ENCODE measurements at regions of chr19 and their contacts with region 1.

Region 1: GRCh38 chr19:56170261-56170660 is 5.5 kb upstream of the GALP start:
- DNase-seq: no peak
- H3K4me3 ChIP-seq: no peak overlapping the region
- H3K27ac ChIP-seq: no peak overlapping the region
- H3K4me1 ChIP-seq: no peaks in the 10 kb centered on the region
- H3K27me3 ChIP-seq: peaks cover 0 to 2% of the 10 kb centered on the region in 2 experiments
- CTCF ChIP-seq: no peak
- POLR2A ChIP-seq: no peak

Region 2: GRCh38 chr19:56080669-56081401 is 89.4 kb before region 1 on chr19:
- CTCF ChIA-PET with region 1: interaction called, 328 read pairs
- POLR2A ChIA-PET with region 1: interaction called, 3 read pairs
- dilution Hi-C with region 1: no loop called
- intact Hi-C with region 1: loop called (anchors 1 kb)
- DNase-seq: peak; percentile 83
- H3K4me3 ChIP-seq: peak overlapping the region; percentile 10 to 38 (median 32)
- H3K27ac ChIP-seq: no peak overlapping the region
- H3K4me1 ChIP-seq: peaks cover 8% of the 10 kb centered on the region
- H3K27me3 ChIP-seq: peaks cover 0 to 3% of the 10 kb centered on the region in 2 experiments
- CTCF ChIP-seq: peak; percentile 58 to 81
- POLR2A ChIP-seq: no peak

Region 3: DNA sequence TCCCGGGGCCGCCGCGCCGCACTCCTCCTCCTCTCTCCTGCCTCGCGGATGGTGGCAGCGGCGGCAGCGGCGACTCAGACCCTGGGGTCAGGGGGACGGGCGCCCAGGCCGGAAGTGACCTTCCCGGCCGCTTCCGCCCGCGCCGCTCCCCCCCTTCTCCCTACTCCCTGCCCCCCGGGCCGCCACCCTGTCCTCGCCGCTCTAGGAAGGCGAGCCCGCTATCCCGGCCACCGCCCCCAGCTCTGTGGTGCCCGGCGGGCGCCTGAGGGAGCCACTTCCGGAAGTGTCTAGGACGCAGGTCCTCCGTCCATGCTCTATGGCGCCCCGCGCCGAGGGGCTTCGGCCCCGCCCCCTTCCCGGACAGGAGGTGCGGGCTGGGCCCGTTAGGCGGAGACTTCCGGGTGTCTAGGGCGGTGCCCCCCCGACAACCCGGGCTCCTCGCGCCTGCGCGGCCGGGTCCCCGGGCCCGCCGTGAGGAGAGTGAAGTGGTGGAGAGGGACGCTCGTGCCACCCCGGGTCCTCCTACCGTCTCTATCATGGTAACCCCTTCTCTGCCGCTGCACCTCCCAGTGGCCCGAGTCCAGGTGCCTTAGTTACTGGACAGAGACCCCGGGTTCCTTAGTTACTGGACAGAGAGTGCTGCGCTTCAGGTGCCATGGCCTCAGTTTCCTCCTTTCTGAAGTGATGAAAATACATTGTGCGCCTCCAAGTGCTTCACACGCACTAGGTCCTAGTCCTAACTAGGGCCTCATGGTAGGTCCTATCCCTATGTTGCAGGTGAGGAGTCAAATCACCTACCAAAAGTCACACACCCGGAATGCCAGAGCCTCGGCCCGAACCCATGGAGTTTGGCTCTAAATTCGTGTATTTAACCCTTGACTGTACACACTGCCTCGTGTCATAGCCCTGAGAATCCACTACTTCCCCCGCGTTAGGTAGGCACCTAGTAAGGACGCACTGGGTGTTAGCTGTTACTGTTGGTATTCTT is 48.8 kb before region 1 on chr19 and contains the start of gene ZNF787:
- CTCF ChIA-PET with region 1: interaction called, 6 read pairs
- POLR2A ChIA-PET with region 1: interaction called, 6 read pairs
- dilution Hi-C with region 1: no loop called
- intact Hi-C with region 1: loop called (anchors 5 kb)
- DNase-seq: peak; percentile 97
- H3K4me3 ChIP-seq: peak within 1 kb of the TSS; percentile 39 to 60 (median 50)
- H3K27ac ChIP-seq: peak within 1 kb of the TSS; percentile 84
- H3K4me1 ChIP-seq: peaks cover 18% of the 10 kb centered on the region
- H3K27me3 ChIP-seq: no peaks in the 10 kb centered on the region
- CTCF ChIP-seq: no peak
- POLR2A ChIP-seq: peak; percentile 53
- total RNA-seq, gene ZNF787: 31.8 and 32.7 TPM in 2 replicates

Region 4: GRCh38 chr19:56155124-56155687 is 15.1 kb before region 1 on chr19:
- CTCF ChIA-PET with region 1: interaction called, 27 read pairs
- POLR2A ChIA-PET with region 1: no interaction called
- dilution Hi-C with region 1: no loop called
- intact Hi-C with region 1: no loop called
- DNase-seq: no peak
- H3K4me3 ChIP-seq: no peak overlapping the region
- H3K27ac ChIP-seq: no peak overlapping the region
- H3K4me1 ChIP-seq: peaks cover 10% of the 10 kb centered on the region
- H3K27me3 ChIP-seq: no peaks in the 10 kb centered on the region
- CTCF ChIP-seq: peak; percentile 24 to 40
- POLR2A ChIP-seq: no peak

Region 5: GRCh38 chr19:56633021-56633420 is 462.8 kb after region 1 on chr19:
- CTCF ChIA-PET with region 1: no interaction called
- POLR2A ChIA-PET with region 1: no interaction called
- dilution Hi-C with region 1: no loop called
- intact Hi-C with region 1: no loop called
- DNase-seq: no peak
- H3K4me3 ChIP-seq: no peak overlapping the region
- H3K27ac ChIP-seq: no peak overlapping the region
- H3K4me1 ChIP-seq: no peaks in the 10 kb centered on the region
- H3K27me3 ChIP-seq: no peaks in the 10 kb centered on the region
- CTCF ChIP-seq: no peak
- POLR2A ChIP-seq: no peak